ENCODE measurements at regions of chr2 and their contacts with region 1.

Region 1: DNA sequence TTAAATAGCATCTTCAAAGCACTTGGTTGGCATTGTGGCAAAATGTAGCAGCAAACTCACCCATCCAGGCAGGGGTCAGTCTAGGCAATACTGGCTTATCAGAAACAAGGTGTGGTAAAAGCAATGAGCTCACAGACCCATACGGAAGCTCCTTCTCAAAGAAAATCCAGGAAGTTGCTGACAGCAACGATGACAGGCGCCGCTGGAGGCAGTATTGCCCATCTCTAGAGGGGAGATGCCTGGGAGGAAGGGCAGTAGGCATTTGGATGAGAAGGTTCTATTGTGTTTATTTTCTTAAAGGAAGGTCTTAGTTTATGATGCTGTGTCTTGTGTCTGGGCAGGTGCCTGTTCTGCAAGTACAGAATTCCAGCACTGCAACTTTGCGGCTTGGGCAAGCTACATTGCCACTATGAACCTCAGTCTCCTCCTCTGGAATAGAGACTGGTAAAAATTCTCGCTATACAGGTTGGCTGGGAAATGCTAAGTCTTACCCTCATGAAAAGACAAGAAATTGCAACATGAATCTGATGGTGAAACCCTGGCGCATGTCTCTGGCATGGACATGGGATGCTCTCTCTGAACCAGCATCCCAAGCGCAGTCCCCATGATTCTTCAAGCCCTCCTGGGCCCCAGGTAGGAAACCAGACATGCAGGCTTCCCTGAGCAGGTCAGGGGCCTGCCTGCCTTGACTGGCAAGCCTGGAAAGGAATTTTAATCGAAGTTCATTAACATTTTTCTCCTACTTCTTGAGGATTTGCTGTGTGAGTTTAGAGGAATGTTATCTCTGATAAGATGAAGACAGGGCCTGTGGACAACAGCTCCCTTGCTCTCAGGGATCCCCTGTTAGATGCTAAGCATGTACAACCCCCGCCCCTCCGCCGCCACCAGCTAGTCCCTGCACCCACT is 156.0 kb downstream of the TFCP2L1 start:
- DNase-seq: peak; percentile 74 to 75
- H3K4me3 ChIP-seq: no peak overlapping the region
- H3K4me3 Mint-ChIP-seq: no peak overlapping the region
- H3K27ac Mint-ChIP-seq: no peak overlapping the region
- H3K4me1 ChIP-seq: peaks cover 5% of the 10 kb centered on the region; the same call in 1 of the 2 replicates
- H3K4me1 Mint-ChIP-seq: peaks cover under 1% of the 10 kb centered on the region
- H3K27me3 ChIP-seq: no peaks in the 10 kb centered on the region; the same call in 1 of the 2 replicates
- H3K27me3 Mint-ChIP-seq: peaks cover 6% of the 10 kb centered on the region
- CTCF ChIP-seq: peak; percentile 65 to 90

Region 2: GRCh38 chr2:121085801-121086200 is 43.2 kb before region 1 on chr2:
- CTCF ChIA-PET with region 1: interaction called, 11 read pairs
- POLR2A ChIA-PET with region 1: no interaction called
- intact Hi-C with region 1: no loop called
- DNase-seq: no peak
- H3K4me3 ChIP-seq: no peak overlapping the region
- H3K4me3 Mint-ChIP-seq: no peak overlapping the region
- H3K27ac Mint-ChIP-seq: no peak overlapping the region
- H3K4me1 ChIP-seq: no peaks in the 10 kb centered on the region
- H3K4me1 Mint-ChIP-seq: no peaks in the 10 kb centered on the region
- H3K27me3 ChIP-seq: no peaks in the 10 kb centered on the region
- H3K27me3 Mint-ChIP-seq: no peaks in the 10 kb centered on the region
- CTCF ChIP-seq: no peak

Region 3: GRCh38 chr2:121185571-121186074 is 56.6 kb after region 1 on chr2:
- CTCF ChIA-PET with region 1: interaction called, 10 read pairs
- POLR2A ChIA-PET with region 1: no interaction called
- intact Hi-C with region 1: no loop called
- DNase-seq: no peak
- H3K4me3 ChIP-seq: no peak overlapping the region
- H3K4me3 Mint-ChIP-seq: no peak overlapping the region
- H3K27ac Mint-ChIP-seq: no peak overlapping the region
- H3K4me1 ChIP-seq: no peaks in the 10 kb centered on the region
- H3K4me1 Mint-ChIP-seq: no peaks in the 10 kb centered on the region
- H3K27me3 ChIP-seq: no peaks in the 10 kb centered on the region
- H3K27me3 Mint-ChIP-seq: no peaks in the 10 kb centered on the region
- CTCF ChIP-seq: no peak

Region 4: DNA sequence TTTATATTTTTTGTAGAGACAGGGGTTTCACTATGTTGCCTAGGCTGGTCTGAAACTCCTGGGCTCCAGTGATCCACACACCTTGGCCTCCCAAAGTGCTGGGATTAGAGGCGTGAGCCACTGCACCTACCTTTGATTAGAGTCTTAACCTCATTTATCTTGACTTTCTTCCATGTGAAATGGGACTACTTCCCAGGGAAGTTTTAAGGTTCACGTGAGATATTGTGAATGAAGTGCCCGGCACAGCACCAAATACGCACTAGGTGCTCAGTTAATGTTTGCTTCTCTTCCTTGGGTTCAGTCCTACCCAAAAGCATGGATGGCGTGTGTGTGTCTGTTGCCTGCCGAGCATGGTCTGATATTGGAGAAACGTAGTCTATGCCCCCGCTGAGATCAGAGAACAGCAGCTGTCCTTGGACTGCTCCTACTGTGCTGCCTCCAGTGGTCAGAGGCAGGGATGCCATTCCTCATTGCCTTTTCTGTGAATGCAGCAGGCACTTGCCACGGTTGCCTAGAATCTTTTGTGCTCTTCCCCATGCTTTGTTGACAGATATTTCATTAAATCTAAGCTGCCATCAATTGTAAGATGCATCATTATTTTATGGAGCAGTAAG is 168.3 kb after region 1 on chr2:
- CTCF ChIA-PET with region 1: interaction called, 9 read pairs
- POLR2A ChIA-PET with region 1: no interaction called
- intact Hi-C with region 1: loop called (anchors 2 kb)
- DNase-seq: peak; percentile 60 to 62
- H3K4me3 ChIP-seq: no peak overlapping the region
- H3K4me3 Mint-ChIP-seq: no peak overlapping the region
- H3K27ac Mint-ChIP-seq: no peak overlapping the region
- H3K4me1 ChIP-seq: no peaks in the 10 kb centered on the region
- H3K4me1 Mint-ChIP-seq: no peaks in the 10 kb centered on the region
- H3K27me3 ChIP-seq: no peaks in the 10 kb centered on the region
- H3K27me3 Mint-ChIP-seq: peaks cover 6% of the 10 kb centered on the region
- CTCF ChIP-seq: peak; percentile 64 to 84

Region 5: GRCh38 chr2:121333834-121334558 is 205.0 kb after region 1 on chr2:
- CTCF ChIA-PET with region 1: interaction called, 21 read pairs
- POLR2A ChIA-PET with region 1: no interaction called
- intact Hi-C with region 1: no loop called
- DNase-seq: no peak
- H3K4me3 ChIP-seq: no peak overlapping the region
- H3K4me3 Mint-ChIP-seq: no peak overlapping the region
- H3K27ac Mint-ChIP-seq: peak overlapping the region; percentile 83
- H3K4me1 ChIP-seq: peaks cover 23% of the 10 kb centered on the region
- H3K4me1 Mint-ChIP-seq: peaks cover 14% of the 10 kb centered on the region
- H3K27me3 ChIP-seq: no peaks in the 10 kb centered on the region
- H3K27me3 Mint-ChIP-seq: no peaks in the 10 kb centered on the region
- CTCF ChIP-seq: no peak

Region 6: GRCh38 chr2:121471532-121472469 is 342.8 kb after region 1 on chr2:
- CTCF ChIA-PET with region 1: no interaction called
- POLR2A ChIA-PET with region 1: no interaction called
- intact Hi-C with region 1: no loop called
- DNase-seq: peak in 1 of 2 experiments; percentile 17
- H3K4me3 ChIP-seq: no peak overlapping the region
- H3K4me3 Mint-ChIP-seq: no peak overlapping the region
- H3K27ac Mint-ChIP-seq: peak overlapping the region; percentile 48
- H3K4me1 ChIP-seq: peaks cover 12% of the 10 kb centered on the region
- H3K4me1 Mint-ChIP-seq: peaks cover 26% of the 10 kb centered on the region
- H3K27me3 ChIP-seq: no peaks in the 10 kb centered on the region
- H3K27me3 Mint-ChIP-seq: no peaks in the 10 kb centered on the region
- CTCF ChIP-seq: no peak

Region 7: DNA sequence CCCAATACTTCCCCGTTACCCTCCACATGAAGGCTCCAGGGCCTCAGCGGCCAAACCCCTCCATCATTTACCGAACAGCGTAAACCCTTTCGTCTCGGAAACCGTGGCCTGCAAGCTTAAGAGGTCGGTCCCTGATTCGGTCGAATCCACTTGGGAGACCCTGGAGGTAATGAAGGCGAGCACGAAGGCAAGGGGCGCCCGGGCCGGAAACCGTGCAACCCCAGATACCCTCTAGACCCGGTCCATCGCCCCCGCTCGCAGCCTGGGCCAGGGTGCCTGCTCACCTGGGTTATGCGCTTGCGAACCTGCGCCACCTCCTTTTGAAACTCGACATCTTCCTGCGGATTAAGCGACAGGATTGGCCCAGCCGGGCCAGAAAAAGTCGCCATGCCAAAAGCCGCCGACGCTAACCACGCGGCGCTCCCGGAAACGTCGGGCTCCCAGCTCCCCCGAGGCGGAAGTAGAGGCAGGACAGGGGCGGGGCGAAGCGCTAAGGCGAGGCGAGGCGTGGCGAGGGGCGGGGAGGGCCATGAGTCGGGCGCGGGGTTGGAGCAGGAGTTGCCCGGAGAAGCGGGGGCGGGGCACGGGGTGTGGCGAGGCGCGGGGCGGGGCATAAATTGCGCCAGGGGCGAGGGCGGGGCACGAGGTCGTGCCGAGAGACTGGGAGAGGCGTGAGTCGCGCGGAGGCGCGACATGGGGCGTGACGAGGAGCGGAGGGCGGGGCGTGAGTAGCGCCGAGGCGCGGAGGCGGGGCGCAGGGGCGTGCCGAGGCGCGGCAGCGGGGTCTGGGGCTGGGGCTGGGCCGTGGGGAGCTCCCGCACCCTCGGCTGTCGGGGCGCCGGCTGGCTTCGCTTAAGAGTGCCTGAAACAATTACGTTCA is 607.7 kb after region 1 on chr2 and contains the start of gene NIFK:
- CTCF ChIA-PET with region 1: no interaction called
- POLR2A ChIA-PET with region 1: no interaction called
- intact Hi-C with region 1: no loop called
- DNase-seq: peak; percentile 99 to 100
- H3K4me3 ChIP-seq: peak within 1 kb of the TSS; percentile 82
- H3K4me3 Mint-ChIP-seq: peak within 1 kb of the TSS; percentile 98
- H3K27ac Mint-ChIP-seq: peak within 1 kb of the TSS; percentile 96
- H3K4me1 ChIP-seq: peaks cover 14% of the 10 kb centered on the region
- H3K4me1 Mint-ChIP-seq: peaks cover 15% of the 10 kb centered on the region
- H3K27me3 ChIP-seq: no peaks in the 10 kb centered on the region
- H3K27me3 Mint-ChIP-seq: no peaks in the 10 kb centered on the region
- CTCF ChIP-seq: no peak
- total RNA-seq, gene NIFK: 84.7 and 104 TPM in 2 replicates

Region 8: GRCh38 chr2:121907928-121908327 is 778.9 kb after region 1 on chr2:
- CTCF ChIA-PET with region 1: no interaction called
- POLR2A ChIA-PET with region 1: no interaction called
- intact Hi-C with region 1: no loop called
- DNase-seq: no peak
- H3K4me3 ChIP-seq: no peak overlapping the region
- H3K4me3 Mint-ChIP-seq: no peak overlapping the region
- H3K27ac Mint-ChIP-seq: no peak overlapping the region
- H3K4me1 ChIP-seq: no peaks in the 10 kb centered on the region
- H3K4me1 Mint-ChIP-seq: no peaks in the 10 kb centered on the region
- H3K27me3 ChIP-seq: no peaks in the 10 kb centered on the region
- H3K27me3 Mint-ChIP-seq: peaks cover 25% of the 10 kb centered on the region
- CTCF ChIP-seq: no peak